CD4-positive, alpha-beta memory T cell (primary cell): ENCODE measurements at regions of chr1 and their contacts with region 1.

Region 1: DNA sequence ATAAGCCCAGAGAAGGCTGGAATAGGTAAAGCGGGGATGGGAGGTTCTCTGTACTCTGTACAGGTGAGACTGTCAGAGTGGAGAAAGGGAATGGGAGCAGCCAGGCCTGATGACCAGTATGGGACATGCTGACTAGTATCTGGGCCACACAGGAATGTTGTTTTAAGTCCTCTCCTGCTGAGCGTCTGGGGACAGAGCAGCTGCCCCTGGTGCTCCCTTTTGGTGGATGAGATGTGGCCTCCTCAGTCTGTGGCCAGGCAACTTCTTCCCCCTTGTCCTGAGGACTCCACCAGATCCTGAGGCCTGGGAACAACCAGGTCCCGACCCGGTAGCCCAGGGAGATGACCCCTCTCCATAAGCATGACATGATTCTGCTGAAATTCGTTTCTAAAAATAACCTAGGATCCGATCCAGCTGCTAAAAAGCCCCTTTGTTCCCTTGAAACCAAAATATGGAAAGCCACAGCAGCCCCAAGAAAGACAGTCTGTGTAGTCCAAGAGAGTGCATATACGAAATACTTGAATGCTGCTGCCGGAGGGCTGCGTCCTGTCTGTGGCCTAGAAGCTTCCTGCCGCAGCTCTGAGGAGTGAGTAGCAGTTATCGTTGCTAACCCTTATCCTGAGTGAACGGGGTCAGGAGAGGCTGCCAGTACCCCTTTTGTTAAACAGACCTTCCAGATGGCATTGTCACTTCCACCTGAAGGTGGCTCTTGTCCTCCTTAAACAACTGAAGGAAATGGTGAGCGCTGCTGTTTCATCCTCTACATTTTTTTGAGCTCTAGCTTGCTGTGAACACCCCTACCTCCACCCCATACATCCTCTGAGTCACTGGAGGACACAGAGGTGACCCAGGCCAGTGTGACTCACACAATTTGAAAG is 47.2 kb downstream of the ATP2B4 start:
- DNase-seq: peak; percentile 84 to 94 (median 88)
- H3K4me3 ChIP-seq: peak overlapping the region in 1 of 2 donors; percentile 30
- H3K4me3 Mint-ChIP-seq: peak overlapping the region; percentile 78 to 93 (median 84)
- H3K27ac ChIP-seq: peak overlapping the region; percentile 65
- H3K27ac Mint-ChIP-seq: peak overlapping the region; percentile 93 to 99 (median 98)
- H3K4me1 ChIP-seq: peaks cover 82% of the 10 kb centered on the region
- H3K4me1 Mint-ChIP-seq: peaks cover 56 to 92% (median 77%) of the 10 kb centered on the region in 4 donors
- H3K27me3 ChIP-seq: no peaks in the 10 kb centered on the region
- H3K27me3 Mint-ChIP-seq: no peaks in the 10 kb centered on the region

Region 2: GRCh38 chr1:203593723-203594122 is 80.1 kb before region 1 on chr1:
- CTCF ChIA-PET with region 1: interaction called, 14 read pairs
- POLR2A ChIA-PET with region 1: no interaction called
- intact Hi-C with region 1: loop called (anchors 1 kb)
- DNase-seq: peak; percentile 49 to 63 (median 55)
- H3K4me3 ChIP-seq: no peak overlapping the region
- H3K4me3 Mint-ChIP-seq: no peak overlapping the region
- H3K27ac ChIP-seq: no peak overlapping the region
- H3K27ac Mint-ChIP-seq: peak overlapping the region in 2 of 7 donors; percentile 1 to 33
- H3K4me1 ChIP-seq: peaks cover 3% of the 10 kb centered on the region
- H3K4me1 Mint-ChIP-seq: peaks cover 5 to 11% (median 7%) of the 10 kb centered on the region in 4 donors
- H3K27me3 ChIP-seq: no peaks in the 10 kb centered on the region
- H3K27me3 Mint-ChIP-seq: peaks cover 0 to 4% of the 10 kb centered on the region in 2 donors

Region 3: DNA sequence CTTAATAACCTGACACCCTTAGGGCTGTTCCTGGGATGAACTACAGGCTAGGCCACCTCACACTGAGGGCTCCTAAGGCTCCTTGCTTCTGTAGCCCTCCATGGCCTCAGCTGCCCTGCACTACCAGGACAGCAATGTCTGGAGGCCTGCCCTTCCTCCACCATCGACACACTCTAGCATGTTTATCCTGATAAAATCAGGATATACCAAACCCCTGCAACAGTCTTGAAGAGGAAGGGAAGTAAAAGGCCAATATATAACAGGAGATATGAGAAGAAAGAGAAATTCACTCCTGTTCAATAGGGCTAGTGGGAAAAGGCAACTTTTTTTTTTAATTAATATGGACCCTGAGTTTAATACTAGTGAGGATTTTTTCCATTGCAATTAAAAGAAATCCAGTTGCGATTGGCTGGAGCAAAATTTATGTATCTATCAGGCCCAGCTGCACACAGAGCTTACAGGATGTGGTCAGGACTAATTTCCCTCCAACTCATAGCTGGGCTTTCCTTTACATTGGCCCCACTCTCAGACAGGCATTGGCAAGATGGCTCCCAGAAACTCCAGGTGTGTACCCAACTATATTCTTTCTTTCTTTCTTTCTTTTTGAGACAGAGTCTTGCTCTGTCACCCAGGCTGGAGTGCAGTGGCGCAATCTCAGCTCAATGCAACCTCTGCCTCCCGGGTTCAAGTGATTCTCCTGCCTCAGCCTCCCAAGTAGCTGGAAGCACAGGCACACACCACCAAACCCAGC is 60.7 kb before region 1 on chr1:
- CTCF ChIA-PET with region 1: interaction called, 5 read pairs
- POLR2A ChIA-PET with region 1: interaction called, 14 read pairs
- intact Hi-C with region 1: no loop called
- DNase-seq: no peak
- H3K4me3 ChIP-seq: no peak overlapping the region
- H3K4me3 Mint-ChIP-seq: peak overlapping the region in 5 of 8 donors; percentile 21 to 57 (median 49)
- H3K27ac ChIP-seq: no peak overlapping the region
- H3K27ac Mint-ChIP-seq: peak overlapping the region in 6 of 7 donors; percentile 41 to 73 (median 56)
- H3K4me1 ChIP-seq: peaks cover 39% of the 10 kb centered on the region
- H3K4me1 Mint-ChIP-seq: peaks cover 29 to 53% (median 39%) of the 10 kb centered on the region in 4 donors
- H3K27me3 ChIP-seq: no peaks in the 10 kb centered on the region
- H3K27me3 Mint-ChIP-seq: no peaks in the 10 kb centered on the region

Region 4: DNA sequence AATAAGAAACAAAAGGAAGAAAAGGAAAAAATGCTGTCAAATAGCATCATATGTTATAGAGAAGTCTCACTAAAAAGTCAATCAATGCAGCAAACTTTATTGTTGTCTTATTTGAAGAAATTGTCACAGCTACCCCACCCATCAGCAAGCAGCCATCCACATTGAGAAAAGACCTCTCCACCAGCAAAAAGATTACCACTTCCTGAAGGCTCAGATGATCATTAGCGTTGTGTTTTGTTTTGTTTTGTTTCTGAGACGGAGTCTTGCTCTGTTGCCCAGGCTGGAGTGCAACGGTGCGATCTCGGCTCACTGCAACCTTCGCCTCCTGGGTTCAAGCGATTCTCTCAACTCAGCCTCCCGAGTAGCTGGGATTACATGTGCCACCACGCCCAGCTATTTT is 18.1 kb before region 1 on chr1:
- CTCF ChIA-PET with region 1: interaction called, 78 read pairs
- POLR2A ChIA-PET with region 1: interaction called, 61 read pairs
- intact Hi-C with region 1: loop called (anchors 1 kb)
- DNase-seq: peak in 4 of 5 donors; percentile 28 to 52 (median 38)
- H3K4me3 ChIP-seq: no peak overlapping the region
- H3K4me3 Mint-ChIP-seq: peak overlapping the region; percentile 27 to 78 (median 71)
- H3K27ac ChIP-seq: peak overlapping the region; percentile 36
- H3K27ac Mint-ChIP-seq: peak overlapping the region; percentile 80 to 96 (median 92)
- H3K4me1 ChIP-seq: peaks cover 69% of the 10 kb centered on the region
- H3K4me1 Mint-ChIP-seq: peaks cover 45 to 77% (median 61%) of the 10 kb centered on the region in 4 donors
- H3K27me3 ChIP-seq: no peaks in the 10 kb centered on the region
- H3K27me3 Mint-ChIP-seq: no peaks in the 10 kb centered on the region

Region 5: GRCh38 chr1:203692565-203693470 is 19.0 kb after region 1 on chr1:
- CTCF ChIA-PET with region 1: interaction called, 13 read pairs
- POLR2A ChIA-PET with region 1: interaction called, 6 read pairs
- intact Hi-C with region 1: no loop called
- DNase-seq: no peak
- H3K4me3 ChIP-seq: no peak overlapping the region
- H3K4me3 Mint-ChIP-seq: peak overlapping the region in 7 of 8 donors; percentile 18 to 78 (median 46)
- H3K27ac ChIP-seq: peak overlapping the region; percentile 42
- H3K27ac Mint-ChIP-seq: peak overlapping the region; percentile 85 to 97 (median 91)
- H3K4me1 ChIP-seq: peaks cover 64% of the 10 kb centered on the region
- H3K4me1 Mint-ChIP-seq: peaks cover 49 to 88% (median 64%) of the 10 kb centered on the region in 4 donors
- H3K27me3 ChIP-seq: no peaks in the 10 kb centered on the region
- H3K27me3 Mint-ChIP-seq: no peaks in the 10 kb centered on the region